Activated T-helper 1 cell treated with anti-CD3 and anti-CD28 coated beads, Interleukin-12 subunit alpha, Interleukin-12 subunit beta, Interleukin-2, Interleukin-4 antibody, amounts not matched to agents 30 ng/mL and 10 ng/mL and 1 ng/mL, durations not matched to agents 14 hours and 24 hours and 36 hours (primary cell): ENCODE measurements at regions of chr4 and their contacts with region 1.

Region 1: GRCh38 chr4:183444214-183445066 is at the start of gene CDKN2AIP:
- DNase-seq: peak; percentile 93
- H3K4me3 Mint-ChIP-seq: peak within 1 kb of the TSS; percentile 99
- H3K27ac Mint-ChIP-seq: peak within 1 kb of the TSS; percentile 99
- H3K4me1 Mint-ChIP-seq: peaks cover 42% of the 10 kb centered on the region
- H3K27me3 Mint-ChIP-seq: peaks cover 2% of the 10 kb centered on the region
- total RNA-seq, gene CDKN2AIP: 23.9 and 24.1 TPM in 2 replicates

Region 2: DNA sequence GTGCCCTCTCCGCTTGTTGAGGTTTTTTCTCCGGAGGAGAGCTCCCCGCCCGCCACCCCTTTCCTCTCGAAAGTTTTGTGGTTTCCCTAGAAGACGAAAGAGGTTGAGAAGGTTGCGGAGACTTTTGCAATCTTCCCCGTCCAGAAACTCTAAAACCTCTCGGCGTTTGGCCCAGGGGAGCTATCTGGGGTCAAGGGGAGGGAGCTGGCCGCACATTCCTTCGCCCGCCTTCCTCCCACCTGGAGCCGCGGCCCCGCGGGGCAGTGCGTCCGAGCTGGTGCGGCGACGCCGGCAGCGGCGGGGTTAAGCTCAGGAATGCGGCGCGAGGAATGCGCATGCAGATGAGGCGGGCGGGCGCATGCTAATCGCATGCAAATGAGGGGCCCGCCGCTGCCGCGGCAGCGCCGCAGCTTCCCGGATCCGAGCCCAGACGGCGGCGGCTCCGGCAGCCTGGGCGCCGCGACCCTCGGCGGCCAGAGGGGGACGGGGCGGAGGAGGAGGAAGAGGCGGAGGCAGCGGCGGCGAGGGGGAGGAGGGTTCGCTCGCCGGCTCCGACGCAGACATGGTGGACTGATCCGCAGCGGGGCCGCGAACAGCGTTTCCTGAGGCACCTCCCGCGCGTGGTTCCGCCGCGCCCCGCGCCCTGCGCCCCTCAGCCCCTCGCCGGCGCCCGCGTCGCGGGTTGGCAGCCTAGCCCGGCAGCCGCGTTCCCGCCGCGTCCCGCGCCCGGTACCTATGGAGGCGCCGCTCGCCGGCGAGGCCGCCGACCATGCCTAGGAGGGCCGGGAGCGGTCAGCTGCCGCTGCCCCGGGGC is 345.5 kb before region 1 on chr4 and contains the start of gene WWC2:
- intact Hi-C with region 1: loop called (anchors 5 kb)
- DNase-seq: peak; percentile 44
- H3K4me3 Mint-ChIP-seq: peak within 1 kb of the TSS; percentile 58
- H3K27ac Mint-ChIP-seq: no peak within 1 kb of the TSS
- H3K4me1 Mint-ChIP-seq: no peaks in the 10 kb centered on the region
- H3K27me3 Mint-ChIP-seq: peaks cover 68% of the 10 kb centered on the region
- total RNA-seq, gene WWC2: 0.39 and 0.75 TPM in 2 replicates

Region 3: GRCh38 chr4:183398227-183399125 is 46.0 kb before region 1 on chr4:
- intact Hi-C with region 1: loop called (anchors 2 kb)
- DNase-seq: peak; percentile 46
- H3K4me3 Mint-ChIP-seq: peak overlapping the region; percentile 85
- H3K27ac Mint-ChIP-seq: peak overlapping the region; percentile 79
- H3K4me1 Mint-ChIP-seq: peaks cover 20% of the 10 kb centered on the region
- H3K27me3 Mint-ChIP-seq: peaks cover 36% of the 10 kb centered on the region

Region 4: DNA sequence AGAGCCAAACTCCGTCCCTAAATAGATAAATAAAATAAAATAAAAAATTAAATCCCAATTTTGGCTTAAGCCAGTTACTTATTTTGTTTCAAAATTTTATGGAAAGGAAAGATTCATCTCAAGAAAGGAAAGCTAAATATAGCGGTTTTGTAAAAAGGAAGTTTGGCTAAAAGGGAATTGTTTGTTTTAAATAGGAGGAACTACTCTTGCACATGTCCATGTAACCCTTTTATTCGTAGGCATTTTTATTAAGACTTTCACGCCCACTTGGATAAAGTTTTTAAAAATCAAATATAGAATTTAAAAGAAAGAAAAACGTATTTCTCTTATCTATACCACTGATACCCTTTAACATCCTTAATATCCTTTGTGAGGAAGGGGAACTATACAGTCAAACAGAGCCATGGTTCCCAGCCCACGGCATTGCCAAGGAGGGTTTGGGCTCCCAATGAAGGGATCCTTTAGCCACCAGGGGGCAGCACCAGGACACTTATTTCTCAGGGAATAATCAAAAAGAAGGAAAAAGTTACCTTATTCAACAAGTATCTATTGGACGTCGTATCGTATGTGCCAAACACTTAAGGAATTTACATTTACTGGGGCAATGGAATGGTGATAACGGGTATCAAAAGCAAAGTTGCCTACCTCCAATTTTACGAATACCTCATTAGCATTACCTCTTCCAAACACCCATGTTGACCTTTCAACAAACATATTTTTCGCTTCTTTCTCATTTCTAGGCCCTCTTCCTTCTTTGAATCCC is 27.7 kb after region 1 on chr4:
- intact Hi-C with region 1: loop called (anchors 2 kb)
- DNase-seq: peak; percentile 56
- H3K4me3 Mint-ChIP-seq: no peak overlapping the region
- H3K27ac Mint-ChIP-seq: no peak overlapping the region
- H3K4me1 Mint-ChIP-seq: peaks cover 6% of the 10 kb centered on the region
- H3K27me3 Mint-ChIP-seq: peaks cover 5% of the 10 kb centered on the region

Region 5: GRCh38 chr4:183722731-183723560 is 278.5 kb after region 1 on chr4:
- intact Hi-C with region 1: loop called (anchors 1 kb)
- DNase-seq: peak; percentile 44
- H3K4me3 Mint-ChIP-seq: peak overlapping the region; percentile 84
- H3K27ac Mint-ChIP-seq: no peak overlapping the region
- H3K4me1 Mint-ChIP-seq: peaks cover 15% of the 10 kb centered on the region
- H3K27me3 Mint-ChIP-seq: peaks cover 34% of the 10 kb centered on the region